CD4-positive, alpha-beta memory T cell (primary cell): ENCODE measurements at regions of chr20 and their contacts with region 1.

Region 1: GRCh38 chr20:39066471-39067242 is 104.5 kb downstream of the DHX35 start:
- DNase-seq: no peak
- H3K4me3 ChIP-seq: no peak overlapping the region
- H3K4me3 Mint-ChIP-seq: no peak overlapping the region
- H3K27ac ChIP-seq: no peak overlapping the region
- H3K27ac Mint-ChIP-seq: no peak overlapping the region
- H3K4me1 ChIP-seq: no peaks in the 10 kb centered on the region
- H3K4me1 Mint-ChIP-seq: no peaks in the 10 kb centered on the region
- H3K27me3 ChIP-seq: no peaks in the 10 kb centered on the region
- H3K27me3 Mint-ChIP-seq: peaks cover 18 to 20% of the 10 kb centered on the region in 2 donors

Region 2: DNA sequence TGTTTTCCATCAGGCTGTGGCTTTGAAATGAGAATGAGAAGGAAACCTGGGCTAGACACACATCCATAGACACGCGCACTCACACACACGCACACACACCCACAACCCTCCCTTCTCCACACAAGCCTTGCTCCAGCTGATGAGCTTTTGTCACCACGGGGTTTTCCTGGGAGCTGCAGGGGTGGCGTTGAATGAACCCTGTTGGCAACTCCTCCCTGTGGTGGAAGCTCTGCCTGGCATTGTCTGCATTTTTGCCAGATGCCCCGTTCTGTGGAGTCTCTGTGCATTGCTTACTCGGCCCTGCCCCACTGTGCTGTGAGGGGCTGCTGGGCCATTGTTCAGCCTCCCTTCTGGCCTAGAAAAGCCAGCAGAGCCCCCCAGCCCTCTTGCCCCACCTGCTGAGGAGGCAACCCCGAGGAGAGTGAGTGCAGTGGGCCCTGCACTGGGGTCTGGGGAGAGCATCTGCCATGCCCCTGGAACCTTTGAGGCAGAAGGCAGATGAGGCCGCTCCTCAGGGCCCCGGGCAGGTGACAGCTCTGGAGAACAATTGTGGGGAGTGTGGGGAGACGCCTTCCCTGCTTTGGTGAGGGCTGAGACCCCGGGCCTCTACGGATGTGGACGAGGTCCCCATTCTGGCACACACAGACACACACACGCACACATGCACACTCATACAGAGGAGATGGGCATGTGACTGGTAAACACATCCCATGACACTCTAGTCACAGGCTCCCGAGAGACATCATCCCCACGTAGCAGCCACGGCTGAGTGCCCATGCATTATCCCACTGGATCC is 475.8 kb before region 1 on chr20:
- CTCF ChIA-PET with region 1: no interaction called
- POLR2A ChIA-PET with region 1: no interaction called
- intact Hi-C with region 1: no loop called
- DNase-seq: no peak
- H3K4me3 ChIP-seq: no peak overlapping the region
- H3K4me3 Mint-ChIP-seq: no peak overlapping the region
- H3K27ac ChIP-seq: no peak overlapping the region
- H3K27ac Mint-ChIP-seq: no peak overlapping the region
- H3K4me1 ChIP-seq: no peaks in the 10 kb centered on the region
- H3K4me1 Mint-ChIP-seq: no peaks in the 10 kb centered on the region
- H3K27me3 ChIP-seq: no peaks in the 10 kb centered on the region
- H3K27me3 Mint-ChIP-seq: peaks cover 0 to 3% of the 10 kb centered on the region in 2 donors

Region 3: DNA sequence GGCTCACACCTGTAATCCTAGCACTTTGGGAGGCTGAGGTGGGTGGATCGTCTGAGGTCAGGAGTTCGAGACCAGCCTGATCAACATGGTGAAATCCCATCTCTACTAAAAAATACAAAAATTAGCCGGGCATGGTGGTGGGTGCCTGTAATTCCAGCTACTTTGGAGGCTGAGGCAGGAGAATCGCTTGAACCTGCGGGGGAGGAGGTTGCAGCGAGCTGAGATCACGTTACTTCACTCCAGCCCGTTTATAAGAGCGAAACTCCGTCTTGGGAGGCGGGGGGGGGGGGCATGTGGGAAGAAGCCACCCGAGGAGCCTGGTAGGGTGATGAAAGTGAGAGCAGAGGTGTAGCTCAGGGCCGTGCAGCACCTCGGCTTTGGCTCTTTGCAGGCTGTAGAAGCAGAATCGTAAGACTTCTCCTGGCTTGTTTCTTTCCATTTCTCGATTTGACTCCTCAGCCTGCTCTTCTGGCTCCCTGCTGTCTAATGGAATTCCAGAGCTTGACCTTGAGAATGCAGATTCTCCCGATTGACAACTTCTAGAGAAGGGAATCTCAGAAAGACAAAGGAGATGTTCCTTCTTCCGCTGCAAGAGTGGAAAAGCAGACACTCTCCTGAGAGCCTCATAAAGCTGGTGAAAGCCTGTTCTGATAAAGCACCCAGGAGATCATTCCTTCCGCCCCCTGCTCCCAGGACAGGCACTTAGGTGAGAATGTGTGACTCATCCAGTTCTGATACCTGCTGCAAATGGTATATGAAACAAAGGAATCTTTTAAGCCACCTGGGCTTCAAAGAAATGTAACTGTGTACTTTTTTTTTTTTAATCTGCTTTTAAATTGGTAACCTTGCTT is 287.2 kb before region 1 on chr20:
- CTCF ChIA-PET with region 1: no interaction called
- POLR2A ChIA-PET with region 1: no interaction called
- intact Hi-C with region 1: no loop called
- DNase-seq: no peak
- H3K4me3 ChIP-seq: no peak overlapping the region
- H3K4me3 Mint-ChIP-seq: peak overlapping the region in 6 of 8 donors; percentile 29 to 71 (median 46)
- H3K27ac ChIP-seq: no peak overlapping the region
- H3K27ac Mint-ChIP-seq: peak overlapping the region in 4 of 7 donors; percentile 49 to 89 (median 58)
- H3K4me1 ChIP-seq: no peaks in the 10 kb centered on the region
- H3K4me1 Mint-ChIP-seq: peaks cover 6 to 9% (median 7%) of the 10 kb centered on the region in 4 donors
- H3K27me3 ChIP-seq: no peaks in the 10 kb centered on the region
- H3K27me3 Mint-ChIP-seq: no peaks in the 10 kb centered on the region

Region 4: DNA sequence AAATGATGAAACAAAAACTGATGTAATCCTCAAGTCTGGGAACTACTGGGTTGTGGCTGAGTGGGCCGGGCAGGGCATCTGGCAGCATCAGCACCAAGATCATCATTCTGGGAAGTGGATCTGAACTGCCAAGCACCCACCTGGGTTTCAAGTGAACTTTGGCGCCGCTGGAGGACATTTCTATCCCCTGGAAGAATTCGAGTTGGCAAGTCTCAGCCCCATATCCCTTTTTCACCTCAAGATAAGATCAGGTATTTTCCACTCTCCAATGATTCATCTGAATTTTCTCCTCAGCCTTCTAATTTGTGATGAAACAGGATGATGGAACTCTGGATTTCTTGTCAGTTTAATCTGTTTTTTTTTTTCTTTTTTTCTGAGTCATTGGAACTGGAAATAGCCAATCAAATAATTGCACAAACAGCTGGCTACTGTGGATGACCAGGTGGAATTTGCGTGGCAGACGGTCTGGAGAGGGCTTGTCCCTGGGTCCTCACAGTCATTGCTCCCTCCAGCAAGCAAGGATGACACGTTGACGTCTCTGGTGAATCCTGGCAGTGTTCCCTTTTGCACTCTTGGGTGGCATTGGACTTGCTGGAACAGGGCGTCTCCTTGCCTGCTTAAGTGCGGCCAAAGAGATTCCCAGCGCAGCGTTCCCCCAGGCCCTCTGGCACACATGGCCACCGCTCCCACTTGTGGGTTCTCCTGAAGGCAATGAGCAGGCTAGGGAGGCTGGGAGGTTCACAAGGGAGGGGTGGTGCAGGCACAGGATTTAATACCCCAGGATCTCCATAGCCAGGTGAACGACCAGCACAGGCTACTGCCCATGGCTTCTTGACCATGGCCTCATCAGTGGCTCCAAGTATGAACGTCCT is 24.1 kb before region 1 on chr20:
- CTCF ChIA-PET with region 1: no interaction called
- POLR2A ChIA-PET with region 1: no interaction called
- intact Hi-C with region 1: no loop called
- DNase-seq: no peak
- H3K4me3 ChIP-seq: no peak overlapping the region
- H3K4me3 Mint-ChIP-seq: peak overlapping the region in 1 of 8 donors; percentile 31
- H3K27ac ChIP-seq: no peak overlapping the region
- H3K27ac Mint-ChIP-seq: no peak overlapping the region
- H3K4me1 ChIP-seq: no peaks in the 10 kb centered on the region
- H3K4me1 Mint-ChIP-seq: no peaks in the 10 kb centered on the region
- H3K27me3 ChIP-seq: no peaks in the 10 kb centered on the region
- H3K27me3 Mint-ChIP-seq: no peaks in the 10 kb centered on the region

Region 5: DNA sequence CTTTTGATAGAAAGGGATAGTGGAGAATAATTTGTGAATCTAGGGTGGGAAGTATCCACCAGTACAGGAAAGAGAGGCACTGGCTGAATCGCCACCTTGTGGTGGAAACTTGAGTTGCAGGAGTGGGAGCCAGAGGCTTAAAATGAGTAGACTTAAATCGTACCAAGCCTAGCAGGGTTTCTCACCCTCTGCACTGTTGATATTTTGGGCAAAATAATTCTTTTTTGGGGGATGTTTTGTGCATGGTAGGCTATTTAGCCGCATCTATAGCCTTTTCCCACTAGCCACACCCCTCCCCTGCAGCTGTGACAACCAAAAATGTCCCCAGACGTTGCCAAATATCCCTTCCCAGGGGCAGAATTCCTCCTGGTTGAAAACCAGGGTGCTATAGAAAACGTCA is 14.6 kb after region 1 on chr20:
- CTCF ChIA-PET with region 1: interaction called, 26 read pairs
- POLR2A ChIA-PET with region 1: no interaction called
- intact Hi-C with region 1: no loop called
- DNase-seq: peak; percentile 66 to 75 (median 69)
- H3K4me3 ChIP-seq: no peak overlapping the region
- H3K4me3 Mint-ChIP-seq: no peak overlapping the region
- H3K27ac ChIP-seq: no peak overlapping the region
- H3K27ac Mint-ChIP-seq: no peak overlapping the region
- H3K4me1 ChIP-seq: no peaks in the 10 kb centered on the region
- H3K4me1 Mint-ChIP-seq: peaks cover 0 to 2% (median 0%) of the 10 kb centered on the region in 4 donors
- H3K27me3 ChIP-seq: no peaks in the 10 kb centered on the region
- H3K27me3 Mint-ChIP-seq: peaks cover 18 to 25% of the 10 kb centered on the region in 2 donors